Activated B cell treated with CpG ODN at 0.5 μM for 24 hours (primary cell): ENCODE measurements at regions of chr15 and their contacts with region 1.

Region 1: DNA sequence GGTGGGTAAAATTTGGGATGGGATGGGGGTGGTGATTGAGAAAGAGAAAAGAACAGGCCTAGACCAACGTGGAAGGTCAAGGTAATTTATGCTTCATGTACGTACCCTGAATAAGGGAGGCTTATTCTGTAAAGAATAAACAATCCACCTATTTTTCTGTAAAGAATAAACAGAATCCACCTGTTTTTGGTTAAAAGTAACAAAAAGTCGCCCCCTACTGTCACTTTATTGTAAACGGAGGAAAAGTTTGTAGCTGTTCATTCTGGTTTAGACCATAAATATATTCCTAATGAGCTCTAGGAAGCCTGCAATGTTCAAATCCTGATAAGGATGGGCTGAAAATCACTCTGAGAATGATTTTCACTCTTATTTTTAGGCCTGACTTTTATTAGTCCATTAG is 23.5 kb upstream of the SQOR start:
- DNase-seq: no peak
- ATAC-seq: no peak
- H3K4me3 Mint-ChIP-seq: no peak overlapping the region
- H3K27ac Mint-ChIP-seq: no peak overlapping the region
- H3K4me1 Mint-ChIP-seq: peaks cover 12% of the 10 kb centered on the region
- H3K27me3 Mint-ChIP-seq: no peaks in the 10 kb centered on the region
- CTCF ChIP-seq: no peak

Region 2: DNA sequence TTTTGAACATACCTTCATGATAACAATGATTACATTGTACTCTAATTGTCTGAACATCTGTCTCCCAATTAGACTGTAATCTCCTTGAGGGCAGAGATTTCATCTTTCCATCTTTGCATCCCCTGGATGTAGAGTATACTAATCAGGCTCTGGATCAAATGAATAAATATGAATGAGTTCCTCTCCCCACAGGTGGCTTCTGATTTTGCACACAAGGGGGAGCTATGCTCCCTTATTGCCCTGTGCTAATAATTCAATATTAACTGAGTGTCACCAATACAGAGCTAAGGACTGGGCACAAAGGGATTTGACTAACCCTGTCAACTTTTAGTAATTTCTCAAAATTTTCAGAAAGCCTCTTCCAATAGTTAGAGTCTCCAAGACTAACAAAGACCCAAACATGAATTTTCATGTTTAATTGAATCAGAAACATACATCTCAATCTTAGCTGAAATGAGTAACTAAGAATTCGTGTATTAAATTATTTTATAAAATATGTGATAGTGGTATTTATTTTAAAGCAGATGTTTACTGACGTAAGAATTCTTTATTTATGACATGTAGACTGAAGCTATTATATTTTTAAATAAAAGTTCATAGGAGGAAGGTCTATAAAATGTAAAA is 484.7 kb before region 1 on chr15:
- CTCF ChIA-PET with region 1: interaction called, 6 read pairs
- POLR2A ChIA-PET with region 1: no interaction called
- intact Hi-C with region 1: loop called (anchors 2 kb)
- DNase-seq: no peak
- ATAC-seq: peak; percentile 68
- H3K4me3 Mint-ChIP-seq: no peak overlapping the region
- H3K27ac Mint-ChIP-seq: no peak overlapping the region
- H3K4me1 Mint-ChIP-seq: peaks cover 7% of the 10 kb centered on the region
- H3K27me3 Mint-ChIP-seq: peaks cover 59% of the 10 kb centered on the region
- CTCF ChIP-seq: no peak

Region 3: GRCh38 chr15:45287390-45287956 is 323.8 kb before region 1 on chr15:
- CTCF ChIA-PET with region 1: no interaction called
- POLR2A ChIA-PET with region 1: no interaction called
- intact Hi-C with region 1: no loop called
- DNase-seq: no peak
- ATAC-seq: no peak
- H3K4me3 Mint-ChIP-seq: no peak overlapping the region
- H3K27ac Mint-ChIP-seq: no peak overlapping the region
- H3K4me1 Mint-ChIP-seq: no peaks in the 10 kb centered on the region
- H3K27me3 Mint-ChIP-seq: peaks cover 14% of the 10 kb centered on the region
- CTCF ChIP-seq: no peak

Region 4: DNA sequence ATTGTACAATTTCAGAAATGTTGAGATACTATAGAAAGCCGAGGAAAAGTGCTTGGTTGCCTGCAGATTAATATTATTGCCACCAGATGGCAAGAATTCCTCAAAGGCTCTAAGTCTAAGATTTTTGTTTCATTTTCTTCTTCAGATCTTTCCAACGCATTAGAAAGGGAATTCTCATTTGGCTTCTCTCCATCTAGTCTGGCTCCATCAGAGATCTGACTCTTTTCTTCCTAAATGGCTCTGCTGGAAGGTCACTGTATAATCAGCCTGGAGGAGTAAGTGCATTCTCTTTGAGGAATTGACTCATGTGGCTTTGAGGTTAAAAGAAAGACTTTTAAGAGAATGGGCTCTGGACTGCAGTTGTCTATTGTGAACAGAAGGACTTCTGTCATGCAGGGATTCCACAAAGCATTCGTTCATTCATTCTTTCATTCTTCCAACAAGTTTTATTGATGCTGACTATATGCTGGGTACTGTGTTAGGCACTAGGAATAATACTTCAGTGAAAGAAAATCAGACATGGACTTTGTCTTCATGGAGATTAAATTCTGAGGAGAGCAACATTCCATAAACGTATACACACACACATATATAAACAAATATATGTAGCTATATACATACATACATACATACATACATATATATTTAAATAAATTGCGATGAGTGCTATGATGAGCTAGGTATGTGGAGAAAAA is 303.9 kb before region 1 on chr15:
- CTCF ChIA-PET with region 1: interaction called, 4 read pairs
- POLR2A ChIA-PET with region 1: no interaction called
- intact Hi-C with region 1: loop called (anchors 2 kb)
- DNase-seq: no peak
- ATAC-seq: no peak
- H3K4me3 Mint-ChIP-seq: peak overlapping the region; percentile 79
- H3K27ac Mint-ChIP-seq: peak overlapping the region; percentile 50
- H3K4me1 Mint-ChIP-seq: peaks cover 4% of the 10 kb centered on the region
- H3K27me3 Mint-ChIP-seq: peaks cover 34% of the 10 kb centered on the region
- CTCF ChIP-seq: no peak

Region 5: DNA sequence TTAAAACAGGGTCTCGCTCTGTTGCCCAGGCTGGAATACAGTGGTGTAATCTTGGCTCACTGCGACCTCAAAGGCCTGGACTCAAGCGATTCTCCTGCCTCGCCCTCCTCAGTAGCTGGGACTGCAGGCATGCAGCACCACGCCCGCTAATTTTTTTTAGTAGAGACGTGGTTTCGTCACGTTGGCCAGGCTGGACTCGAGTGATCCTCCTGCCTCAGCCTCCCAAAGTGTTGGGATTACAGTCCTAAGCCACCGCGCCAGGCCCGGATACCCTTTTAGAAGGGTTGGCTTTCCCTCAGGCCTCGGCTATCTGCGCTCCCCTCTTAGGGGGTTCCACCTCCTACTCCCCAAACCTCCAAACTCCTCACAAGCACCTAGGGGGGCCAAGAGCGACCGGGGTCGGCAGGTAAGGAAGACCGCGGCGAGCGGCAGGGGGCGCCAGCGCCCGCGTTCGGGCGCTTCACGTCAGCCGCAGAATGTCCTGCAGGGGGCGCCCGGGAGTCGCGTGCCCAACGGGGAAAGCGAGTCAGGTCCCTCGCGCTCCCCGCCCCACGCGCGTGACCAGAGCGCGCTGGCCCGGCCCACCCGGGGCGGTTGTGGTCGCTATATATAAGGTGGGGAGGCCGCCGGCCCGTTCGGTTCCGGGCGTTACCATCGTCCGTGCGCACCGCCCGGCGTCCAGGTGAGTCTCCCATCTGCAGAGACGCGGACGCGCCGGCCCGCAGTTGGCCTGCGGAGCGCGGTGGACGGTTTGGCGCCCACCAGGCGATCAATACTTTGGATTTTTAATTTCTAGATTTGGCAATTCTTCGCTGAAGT is 181.1 kb before region 1 on chr15:
- CTCF ChIA-PET with region 1: interaction called, 12 read pairs
- POLR2A ChIA-PET with region 1: no interaction called
- intact Hi-C with region 1: loop called (anchors 1 kb)
- DNase-seq: peak; percentile 87
- ATAC-seq: peak; percentile 94
- H3K4me3 Mint-ChIP-seq: peak overlapping the region; percentile 35
- H3K27ac Mint-ChIP-seq: no peak overlapping the region
- H3K4me1 Mint-ChIP-seq: peaks cover 4% of the 10 kb centered on the region
- H3K27me3 Mint-ChIP-seq: peaks cover 2% of the 10 kb centered on the region
- CTCF ChIP-seq: peak; percentile 98

Region 6: DNA sequence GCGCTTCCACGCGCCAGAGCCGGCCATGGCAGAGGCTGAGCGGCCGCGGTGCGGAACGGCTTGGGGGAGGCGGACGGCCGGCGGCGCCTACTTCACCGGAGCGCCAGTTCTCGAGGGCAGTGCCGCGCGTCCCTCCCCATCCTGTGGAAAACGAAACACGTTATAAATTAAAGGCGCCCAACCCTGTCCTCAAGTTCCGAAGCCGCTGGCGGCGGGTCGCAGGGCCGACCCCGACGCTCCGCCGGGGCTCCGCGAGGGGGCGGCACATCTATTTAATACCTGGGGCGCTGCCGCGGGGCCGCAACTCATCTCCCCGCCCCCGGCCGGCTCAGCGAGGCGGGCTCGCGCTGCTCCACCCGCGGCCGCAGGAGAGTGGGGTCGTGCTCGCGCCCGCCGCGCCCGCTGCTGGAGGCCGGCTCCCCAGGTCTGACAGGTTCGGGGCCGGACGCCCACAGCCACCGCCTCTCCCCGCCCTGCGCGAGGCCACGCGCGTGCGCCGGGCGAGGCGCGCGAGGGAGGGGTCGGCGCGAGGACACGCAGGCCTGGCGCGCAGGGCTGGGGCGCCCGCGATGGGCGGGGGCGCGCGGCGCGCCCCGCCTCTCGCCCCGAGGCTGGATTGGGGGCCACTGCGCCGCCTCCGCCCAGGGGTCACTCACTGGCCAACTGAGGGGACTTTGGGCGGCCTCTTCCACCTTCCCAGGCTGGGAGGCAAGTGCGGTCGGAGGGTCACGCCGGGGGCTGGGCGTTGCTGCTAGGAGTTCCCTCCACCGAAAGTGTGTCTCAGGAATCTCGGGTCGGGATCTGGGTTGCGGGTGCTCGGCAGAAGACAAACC is 88.8 kb before region 1 on chr15 and contains the start of gene SLC30A4:
- CTCF ChIA-PET with region 1: interaction called, 9 read pairs
- POLR2A ChIA-PET with region 1: no interaction called
- intact Hi-C with region 1: loop called (anchors 1 kb)
- DNase-seq: peak; percentile 76
- ATAC-seq: peak; percentile 86
- H3K4me3 Mint-ChIP-seq: peak within 1 kb of the TSS; percentile 90
- H3K27ac Mint-ChIP-seq: peak within 1 kb of the TSS; percentile 83
- H3K4me1 Mint-ChIP-seq: peaks cover 42% of the 10 kb centered on the region
- H3K27me3 Mint-ChIP-seq: no peaks in the 10 kb centered on the region
- CTCF ChIP-seq: no peak
- total RNA-seq, gene SLC30A4: 3.7 and 3.9 TPM in 2 replicates

Region 7: GRCh38 chr15:45660231-45660979 is 49.1 kb after region 1 on chr15:
- CTCF ChIA-PET with region 1: no interaction called
- POLR2A ChIA-PET with region 1: no interaction called
- intact Hi-C with region 1: no loop called
- DNase-seq: no peak
- ATAC-seq: no peak
- H3K4me3 Mint-ChIP-seq: no peak overlapping the region
- H3K27ac Mint-ChIP-seq: no peak overlapping the region
- H3K4me1 Mint-ChIP-seq: peaks cover 7% of the 10 kb centered on the region
- H3K27me3 Mint-ChIP-seq: no peaks in the 10 kb centered on the region
- CTCF ChIP-seq: no peak

Region 8: DNA sequence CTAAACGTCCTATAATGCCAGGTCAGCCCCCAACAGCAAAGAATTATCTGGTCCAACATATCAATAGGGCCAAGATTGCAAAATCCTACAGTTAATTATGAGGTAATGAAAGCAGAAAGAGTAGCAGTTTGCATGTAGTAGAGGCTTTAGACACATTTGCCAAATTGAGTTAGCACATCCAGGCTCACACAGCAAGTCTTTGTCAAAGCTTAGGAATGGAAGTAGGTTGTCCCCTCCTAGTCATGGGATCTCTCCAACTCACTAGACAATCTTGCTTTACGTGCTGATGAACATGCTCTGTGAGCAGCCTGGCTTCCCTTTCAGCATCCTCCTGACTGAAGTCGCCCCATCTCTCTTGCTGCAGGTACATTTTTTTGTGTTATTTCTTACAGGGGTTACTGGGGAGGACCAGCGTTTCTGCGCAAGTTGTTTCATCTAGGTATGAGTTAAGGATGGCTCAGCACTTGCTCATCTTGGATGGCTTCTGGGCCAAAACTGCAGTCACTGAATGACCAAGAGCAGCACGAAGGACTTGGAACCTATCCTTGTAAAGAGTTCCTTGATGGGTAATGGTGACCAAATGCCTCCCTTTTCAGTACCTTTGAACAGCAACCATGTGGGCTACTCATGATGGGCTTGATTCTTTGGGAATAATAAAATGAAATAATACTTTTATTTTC is 79.4 kb after region 1 on chr15:
- CTCF ChIA-PET with region 1: no interaction called
- POLR2A ChIA-PET with region 1: no interaction called
- intact Hi-C with region 1: no loop called
- DNase-seq: no peak
- ATAC-seq: no peak
- H3K4me3 Mint-ChIP-seq: no peak overlapping the region
- H3K27ac Mint-ChIP-seq: no peak overlapping the region
- H3K4me1 Mint-ChIP-seq: no peaks in the 10 kb centered on the region
- H3K27me3 Mint-ChIP-seq: no peaks in the 10 kb centered on the region
- CTCF ChIP-seq: no peak